ENCODE measurements at regions of chr15 and their contacts with region 1.

Region 1: GRCh38 chr15:40421246-40422157 is 15.9 kb downstream of the IVD start:
- DNase-seq: peak in 1 of 2 donors; percentile 81
- H3K4me3 ChIP-seq: peak overlapping the region in 1 of 3 donors; percentile 23
- H3K27ac ChIP-seq: peak overlapping the region; percentile 73 to 80
- H3K4me1 ChIP-seq: peaks cover 0 to 7% of the 10 kb centered on the region in 2 donors
- H3K27me3 ChIP-seq: no peaks in the 10 kb centered on the region
- CTCF ChIP-seq: peak; percentile 81 to 97 (median 93)
- POLR2A ChIP-seq: no peak

Region 2: DNA sequence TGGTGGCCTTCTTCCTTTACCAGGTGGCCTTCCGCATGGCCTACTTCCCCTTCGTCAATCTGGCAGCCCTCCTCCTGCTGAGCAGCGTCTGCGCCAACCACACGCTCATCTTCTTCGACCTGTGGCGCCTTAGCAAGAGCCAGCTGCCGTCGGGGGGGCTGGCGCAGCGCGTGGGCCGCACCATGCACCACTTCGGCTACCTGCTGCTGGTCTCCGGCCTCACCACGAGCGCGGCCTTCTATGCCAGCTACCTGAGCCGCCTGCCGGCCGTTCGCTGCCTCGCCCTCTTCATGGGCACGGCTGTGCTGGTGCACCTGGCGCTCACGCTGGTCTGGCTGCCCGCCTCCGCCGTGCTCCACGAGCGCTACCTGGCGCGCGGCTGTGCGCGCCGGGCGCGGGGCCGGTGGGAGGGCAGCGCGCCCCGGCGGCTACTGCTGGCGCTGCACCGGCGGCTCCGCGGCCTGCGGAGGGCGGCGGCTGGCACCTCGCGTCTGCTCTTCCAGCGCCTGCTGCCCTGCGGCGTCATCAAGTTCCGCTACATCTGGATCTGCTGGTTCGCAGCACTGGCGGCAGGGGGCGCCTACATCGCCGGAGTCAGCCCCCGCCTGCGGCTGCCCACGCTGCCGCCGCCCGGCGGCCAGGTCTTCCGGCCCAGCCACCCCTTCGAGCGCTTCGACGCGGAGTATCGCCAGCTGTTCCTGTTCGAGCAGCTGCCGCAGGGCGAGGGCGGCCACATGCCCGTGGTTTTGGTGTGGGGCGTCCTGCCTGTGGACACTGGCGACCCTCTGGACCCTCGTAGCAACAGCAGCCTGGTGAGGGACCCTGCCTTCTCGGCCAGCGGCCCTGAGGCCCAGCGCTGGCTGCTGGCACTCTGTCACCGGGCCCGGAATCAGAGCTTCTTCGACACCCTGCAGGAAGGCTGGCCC is 53.6 kb before region 1 on chr15:
- intact Hi-C with region 1: loop called (anchors 10 kb)
- DNase-seq: peak; percentile 69 to 83
- H3K4me3 ChIP-seq: peak overlapping the region; percentile 29 to 60 (median 35)
- H3K27ac ChIP-seq: peak overlapping the region in 1 of 2 donors; percentile 29
- H3K4me1 ChIP-seq: peaks cover 0 to 7% of the 10 kb centered on the region in 2 donors
- H3K27me3 ChIP-seq: no peaks in the 10 kb centered on the region
- CTCF ChIP-seq: peak; percentile 46 to 95 (median 47)
- POLR2A ChIP-seq: no peak

Region 3: GRCh38 chr15:41621200-41622193 is 1200.0 kb after region 1 on chr15:
- intact Hi-C with region 1: no loop called
- DNase-seq: peak; percentile 79 to 81
- H3K4me3 ChIP-seq: peak overlapping the region; percentile 45 to 86 (median 68)
- H3K27ac ChIP-seq: peak overlapping the region; percentile 96 to 97
- H3K4me1 ChIP-seq: no peaks in the 10 kb centered on the region
- H3K27me3 ChIP-seq: no peaks in the 10 kb centered on the region
- CTCF ChIP-seq: peak in 1 of 3 donors; percentile 21
- POLR2A ChIP-seq: no peak

Measured in breast epithelium (tissue), 4 donors.